ENCODE measurements at regions of chr9 and their contacts with region 1.

Region 1: DNA sequence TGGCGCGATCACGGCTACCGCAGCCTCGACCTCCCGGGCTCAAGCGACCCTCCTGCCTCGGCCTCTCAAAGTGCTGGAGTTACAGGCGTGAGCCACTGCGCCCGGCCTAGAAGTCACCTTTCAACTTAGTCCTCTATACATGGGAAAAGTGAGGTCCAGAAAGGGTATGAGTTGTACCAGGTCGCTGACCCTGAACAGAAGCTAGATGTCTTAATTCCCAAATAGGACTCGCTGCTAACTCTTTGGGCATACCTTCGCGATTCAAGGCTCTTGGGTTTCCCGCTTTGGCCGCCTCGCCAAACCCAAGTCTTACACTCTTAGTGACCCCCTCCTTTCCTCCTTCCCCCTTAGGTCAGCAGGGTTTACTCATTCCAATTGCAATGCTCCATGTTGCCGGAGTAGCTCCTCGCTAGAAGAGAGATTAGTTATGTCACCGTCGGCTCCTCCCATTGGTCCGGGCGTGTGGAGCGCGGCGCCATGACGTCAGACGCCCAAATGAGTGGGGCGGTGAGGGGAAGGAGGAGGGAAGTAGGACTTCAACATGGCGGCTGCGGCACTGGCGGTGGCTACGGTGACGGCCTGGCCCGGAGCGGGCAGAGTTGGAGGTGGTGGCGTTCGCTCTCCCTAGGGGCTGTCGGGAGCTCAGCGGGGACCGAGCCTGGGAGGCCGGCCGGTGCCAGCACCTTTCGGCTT is at the start of gene UBAP1:
- DNase-seq: peak; percentile 97
- H3K4me3 ChIP-seq: peak within 1 kb of the TSS; percentile 91 to 93
- H3K27ac ChIP-seq: peak within 1 kb of the TSS; percentile 97 to 99
- H3K4me1 ChIP-seq: no peaks in the 10 kb centered on the region
- H3K27me3 ChIP-seq: no peaks in the 10 kb centered on the region
- CTCF ChIP-seq: peak in 2 of 4 experiments; percentile 33
- POLR2A ChIP-seq: peak; percentile 99
- total RNA-seq, gene UBAP1: 38.3 to 72.2 TPM

Region 2: DNA sequence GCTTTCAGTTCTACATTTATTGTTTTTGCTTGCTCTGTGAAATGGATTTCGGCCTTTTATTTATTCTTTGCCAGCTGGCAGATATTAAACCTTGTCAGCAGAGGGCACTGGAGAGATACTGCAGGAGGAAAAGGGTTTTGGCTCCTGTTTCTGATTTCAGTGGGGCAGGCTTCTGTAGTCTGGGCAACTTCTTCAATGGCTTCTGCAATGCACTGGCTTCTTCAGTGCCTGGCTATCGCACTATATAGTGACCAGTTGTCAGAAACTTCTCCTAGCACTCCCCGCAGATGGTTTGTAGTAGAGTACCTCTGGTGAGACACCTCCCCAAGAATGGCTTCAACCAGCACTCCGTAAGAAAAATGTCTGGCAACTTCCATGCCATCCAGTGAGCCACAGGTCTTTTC is 891.6 kb before region 1 on chr9:
- intact Hi-C with region 1: no loop called
- DNase-seq: peak; percentile 54
- H3K4me3 ChIP-seq: no peak overlapping the region
- H3K27ac ChIP-seq: peak overlapping the region; percentile 51 to 53
- H3K4me1 ChIP-seq: peaks cover 3% of the 10 kb centered on the region
- H3K27me3 ChIP-seq: no peaks in the 10 kb centered on the region
- CTCF ChIP-seq: peak; percentile 49 to 85 (median 68)
- POLR2A ChIP-seq: no peak

Region 3: GRCh38 chr9:34126207-34127034 is 52.2 kb before region 1 on chr9 and contains the start of gene DCAF12:
- intact Hi-C with region 1: loop called (anchors 5 kb)
- DNase-seq: peak; percentile 84
- H3K4me3 ChIP-seq: peak within 1 kb of the TSS; percentile 61 to 71
- H3K27ac ChIP-seq: peak within 1 kb of the TSS; percentile 86 to 90
- H3K4me1 ChIP-seq: peaks cover 9% of the 10 kb centered on the region
- H3K27me3 ChIP-seq: no peaks in the 10 kb centered on the region
- CTCF ChIP-seq: peak in 1 of 4 experiments; percentile 3
- POLR2A ChIP-seq: peak; percentile 46
- total RNA-seq, gene DCAF12: 30.6 to 100 TPM